Dorsolateral prefrontal cortex (tissue), 120 donors: ENCODE measurements at regions of chr16 and their contacts with region 1.

Region 1: GRCh38 chr16:85717393-85718121 is 28.8 kb upstream of the GINS2 start:
- DNase-seq: peak; percentile 51 to 77 (median 64)
- H3K4me3 ChIP-seq: no peak overlapping the region
- H3K27ac ChIP-seq: no peak overlapping the region
- H3K27me3 ChIP-seq: peaks cover 0 to 9% (median 0%) of the 10 kb centered on the region in 45 donors
- CTCF ChIP-seq: peak; percentile 65 to 88 (median 81)

Region 2: GRCh38 chr16:84699712-84700445 is 1017.7 kb before region 1 on chr16 and contains the start of gene USP10:
- intact Hi-C with region 1: no loop called
- DNase-seq: peak; percentile 48 to 88 (median 66)
- H3K4me3 ChIP-seq: peak within 1 kb of the TSS; percentile 73 to 99 (median 94)
- H3K27ac ChIP-seq: peak within 1 kb of the TSS in 54 of 59 donors; percentile 23 to 90 (median 73)
- H3K27me3 ChIP-seq: no peaks in the 10 kb centered on the region
- CTCF ChIP-seq: peak in 2 of 56 donors; percentile 12
- total RNA-seq, gene USP10: 58.1 to 104 (median 76.8) TPM

Region 3: DNA sequence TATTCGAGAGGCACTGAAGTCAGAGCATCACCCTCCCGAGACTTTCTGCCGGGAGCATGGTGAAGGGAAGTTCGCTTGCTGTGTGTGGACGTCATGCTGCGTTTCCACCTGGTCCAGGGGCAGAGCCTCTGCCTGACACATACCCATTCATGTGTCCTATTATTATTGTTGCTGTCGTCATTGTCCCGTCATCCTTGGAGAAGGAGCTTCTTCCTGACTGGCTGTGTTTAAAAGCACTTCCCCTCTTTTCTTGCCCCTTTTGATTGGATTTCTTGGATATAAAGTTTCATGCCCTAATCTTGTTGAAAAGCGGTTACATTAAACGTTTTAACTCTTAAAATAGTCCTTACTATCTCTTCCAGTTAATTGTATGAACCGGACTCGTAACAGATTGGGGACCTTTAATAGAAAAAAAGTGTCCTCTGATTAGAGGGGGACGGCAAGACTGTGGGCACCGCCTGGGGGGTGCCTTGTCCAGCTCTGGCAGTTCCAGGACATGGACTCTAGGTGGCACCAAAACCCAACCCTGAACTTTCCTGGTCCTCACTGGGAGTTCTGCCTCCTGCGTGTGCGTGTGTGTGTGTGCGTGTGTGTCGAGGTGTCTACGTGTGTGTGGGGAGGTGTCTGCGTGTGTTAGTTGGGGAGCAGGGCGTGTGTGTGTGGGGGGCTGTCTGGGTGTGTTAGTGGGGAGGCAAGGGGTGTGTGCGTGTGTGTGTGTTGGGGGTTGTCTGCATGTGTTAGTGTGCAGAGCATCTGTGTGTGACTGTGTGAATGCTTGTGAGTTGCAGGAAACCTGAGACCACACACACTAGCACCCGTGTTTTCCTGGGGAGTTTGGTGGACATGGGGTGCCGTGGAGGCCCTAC is 472.0 kb before region 1 on chr16:
- intact Hi-C with region 1: loop called (anchors 5 to 10 kb)
- DNase-seq: peak in 7 of 10 donors; percentile 48 to 70 (median 56)
- H3K4me3 ChIP-seq: no peak overlapping the region
- H3K27ac ChIP-seq: no peak overlapping the region
- H3K27me3 ChIP-seq: peaks cover 0 to 7% (median 0%) of the 10 kb centered on the region in 45 donors
- CTCF ChIP-seq: peak; percentile 17 to 84 (median 76)

Region 4: GRCh38 chr16:85253084-85253941 is 464.2 kb before region 1 on chr16:
- intact Hi-C with region 1: loop called (anchors 5 to 10 kb)
- DNase-seq: peak in 9 of 10 donors; percentile 40 to 78 (median 65)
- H3K4me3 ChIP-seq: no peak overlapping the region
- H3K27ac ChIP-seq: no peak overlapping the region
- H3K27me3 ChIP-seq: peaks cover 0 to 7% (median 0%) of the 10 kb centered on the region in 45 donors
- CTCF ChIP-seq: peak; percentile 56 to 98 (median 90)

Region 5: DNA sequence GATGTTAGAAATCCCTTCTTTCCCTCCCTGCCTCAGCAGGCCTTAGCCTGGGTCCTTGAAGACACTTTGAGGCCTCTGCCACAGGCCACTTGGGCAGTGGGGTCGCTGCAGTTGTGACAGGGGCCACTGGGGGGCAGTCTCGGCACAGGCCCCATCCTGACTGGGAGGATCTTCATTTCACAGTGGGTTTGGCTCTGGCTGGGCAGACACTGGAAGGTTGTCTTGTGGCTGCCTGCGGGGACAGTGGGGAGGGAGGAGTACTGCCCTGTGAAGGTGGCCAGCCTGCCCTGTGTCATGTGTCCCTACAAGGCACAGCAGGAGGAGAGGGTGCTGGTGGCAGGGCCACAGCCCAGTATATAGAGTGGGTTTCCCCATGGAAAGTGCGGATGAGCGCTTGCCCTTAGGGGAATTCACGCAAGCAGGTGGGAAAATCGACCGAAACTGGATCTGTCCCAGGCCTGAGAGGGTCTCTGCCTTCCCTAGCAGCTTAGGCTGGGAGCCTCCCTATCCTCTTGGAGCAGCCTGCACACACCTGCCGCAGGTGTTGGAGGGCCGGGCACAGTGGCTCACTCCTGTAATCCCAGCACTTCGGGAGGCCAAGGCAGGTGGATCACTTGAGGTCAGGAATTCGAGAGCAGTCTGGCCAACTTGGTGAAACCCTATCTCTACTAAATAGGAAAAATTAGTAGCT is 57.6 kb before region 1 on chr16:
- intact Hi-C with region 1: loop called (anchors 2 kb)
- DNase-seq: peak in 8 of 10 donors; percentile 68 to 84 (median 74)
- H3K4me3 ChIP-seq: no peak overlapping the region
- H3K27ac ChIP-seq: peak overlapping the region in 5 of 59 donors; percentile 23 to 53 (median 31)
- H3K27me3 ChIP-seq: no peaks in the 10 kb centered on the region
- CTCF ChIP-seq: peak; percentile 61 to 96 (median 90)

Region 6: DNA sequence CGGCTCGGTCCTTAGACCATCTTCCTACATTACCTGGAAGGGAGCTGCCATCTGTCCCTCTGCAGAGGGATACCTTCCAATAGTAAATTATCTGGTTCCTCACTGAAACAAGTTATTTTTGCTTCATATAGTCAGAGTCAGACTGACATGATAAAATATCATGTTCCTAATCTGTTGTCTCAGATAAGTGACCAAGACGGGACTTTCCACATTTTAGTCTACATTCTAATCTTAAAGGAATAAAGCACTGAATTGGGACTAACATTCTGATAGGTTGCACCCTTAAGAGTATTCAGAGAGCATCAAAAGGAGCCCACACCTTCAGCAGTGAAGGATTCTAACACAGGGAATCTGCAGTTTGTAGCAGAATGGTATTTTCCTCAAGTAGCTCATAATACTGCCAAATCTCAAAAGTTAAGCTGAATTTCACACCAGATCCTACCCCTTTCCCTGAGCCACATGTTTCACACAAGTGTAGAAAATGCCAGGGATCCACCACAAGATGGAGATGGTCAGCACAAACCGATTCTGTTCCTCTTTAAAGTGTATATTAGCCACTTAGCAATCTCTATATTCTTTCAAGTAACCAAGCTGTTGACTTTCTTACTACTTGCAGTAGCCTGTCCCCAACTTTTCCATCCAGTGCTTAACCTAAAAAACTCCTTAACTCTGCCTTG is 42.2 kb before region 1 on chr16:
- intact Hi-C with region 1: loop called in 1 of 2 experiments (anchors 5 kb)
- DNase-seq: peak in 1 of 10 donors; percentile 47
- H3K4me3 ChIP-seq: no peak overlapping the region
- H3K27ac ChIP-seq: no peak overlapping the region
- H3K27me3 ChIP-seq: no peaks in the 10 kb centered on the region
- CTCF ChIP-seq: peak in 51 of 56 donors; percentile 21 to 58 (median 45)